K562 (cell line): ENCODE measurements at regions of chr7 and their contacts with region 1.

Region 1: DNA sequence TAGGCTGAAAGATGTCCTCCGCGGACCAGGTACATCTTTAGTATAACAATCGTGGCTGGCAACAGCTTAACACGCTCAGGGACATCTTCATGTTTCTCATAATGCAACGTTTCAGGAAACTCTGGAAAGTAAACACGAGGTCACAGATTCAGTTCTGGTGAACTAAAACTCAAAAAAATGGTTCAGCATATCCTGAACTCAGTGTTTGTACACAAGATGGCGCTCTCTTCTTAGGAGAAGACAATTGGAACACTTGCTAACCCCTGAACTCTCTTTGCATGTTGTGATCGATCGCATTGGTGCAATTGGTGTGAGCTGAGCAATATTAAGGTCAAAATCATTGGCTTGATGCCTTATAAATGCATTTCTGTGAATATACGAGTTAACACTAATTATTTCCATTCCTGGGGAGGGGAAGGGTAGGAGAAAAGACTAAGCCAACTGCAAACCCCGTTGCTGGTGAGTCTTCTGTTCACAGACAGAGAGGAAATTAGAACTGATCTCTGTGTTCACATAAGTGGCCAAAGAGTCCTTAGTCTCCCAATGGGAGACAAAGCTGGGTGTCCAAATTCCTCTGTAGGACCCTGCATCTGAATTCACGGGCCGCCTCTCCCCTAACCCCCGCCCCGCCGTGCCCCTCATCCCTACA is 52.6 kb upstream of the FAM180A start:
- DNase-seq: peak; percentile 74 to 83 (median 78)
- ATAC-seq: peak; percentile 84
- H3K4me3 ChIP-seq: no peak overlapping the region
- H3K27ac ChIP-seq: no peak overlapping the region
- H3K4me1 ChIP-seq: peaks cover 6 to 10% of the 10 kb centered on the region in 2 experiments; a peak in 3 of 5 replicates
- H3K27me3 ChIP-seq: peaks cover 13 to 27% of the 10 kb centered on the region in 2 experiments; a peak in 4 of 5 replicates
- CTCF ChIP-seq: peak; percentile 87 to 98 (median 96)
- EP300 ChIP-seq: no peak
- POLR2A ChIP-seq: no peak
- RAD21 ChIP-seq: peak; percentile 100

Region 2: GRCh38 chr7:135620980-135621850 is 180.0 kb before region 1 on chr7:
- CTCF ChIA-PET with region 1: no interaction called
- POLR2A ChIA-PET with region 1: no interaction called
- in situ Hi-C with region 1: no loop called
- intact Hi-C with region 1: loop called (anchors 2 kb)
- DNase-seq: peak; percentile 39 to 73 (median 49)
- ATAC-seq: peak; percentile 84
- H3K4me3 ChIP-seq: no peak overlapping the region
- H3K27ac ChIP-seq: no peak overlapping the region
- H3K4me1 ChIP-seq: no peaks in the 10 kb centered on the region
- H3K27me3 ChIP-seq: no peaks in the 10 kb centered on the region
- CTCF ChIP-seq: peak; percentile 59 to 90 (median 79); a peak in 5 of 6 replicates
- EP300 ChIP-seq: no peak
- POLR2A ChIP-seq: no peak
- RAD21 ChIP-seq: peak; percentile 82 to 91

Region 3: GRCh38 chr7:135970682-135971365 is 169.7 kb after region 1 on chr7:
- CTCF ChIA-PET with region 1: no interaction called
- POLR2A ChIA-PET with region 1: no interaction called
- in situ Hi-C with region 1: no loop called
- intact Hi-C with region 1: no loop called
- DNase-seq: no peak
- ATAC-seq: no peak
- H3K4me3 ChIP-seq: no peak overlapping the region
- H3K27ac ChIP-seq: peak overlapping the region; percentile 13; the same call in 1 of the 3 replicates
- H3K4me1 ChIP-seq: peaks cover 6 to 33% of the 10 kb centered on the region in 2 experiments; a peak in 4 of 5 replicates
- H3K27me3 ChIP-seq: no peaks in the 10 kb centered on the region
- CTCF ChIP-seq: no peak
- EP300 ChIP-seq: no peak
- POLR2A ChIP-seq: no peak
- RAD21 ChIP-seq: no peak

Region 4: DNA sequence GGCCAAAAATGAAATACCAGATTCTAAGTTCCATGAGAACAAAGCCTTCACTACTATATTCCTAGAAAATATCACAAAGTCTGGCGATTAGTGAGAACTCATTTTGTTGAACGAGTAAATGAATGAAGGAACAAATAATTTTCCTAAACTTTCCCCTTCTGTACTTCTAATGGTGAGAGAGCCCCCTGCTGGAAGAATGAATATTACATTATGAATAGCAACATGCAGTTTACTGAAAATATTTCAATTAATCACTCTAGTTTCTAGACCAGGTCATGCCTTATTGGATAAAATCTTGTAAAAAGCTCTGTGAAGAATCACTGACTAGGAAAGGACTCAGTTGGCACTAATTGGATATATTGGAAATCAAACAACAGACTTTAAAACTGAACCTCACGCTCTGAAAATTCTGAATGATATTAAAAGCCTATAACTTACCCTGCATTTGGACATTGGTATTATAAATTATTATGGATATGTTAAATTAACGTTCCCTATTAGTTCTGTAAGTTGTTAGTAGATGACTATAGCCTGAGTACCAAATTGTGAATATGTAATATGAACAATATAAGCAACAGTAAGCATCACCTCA is 208.4 kb after region 1 on chr7:
- CTCF ChIA-PET with region 1: interaction called, 68 read pairs
- POLR2A ChIA-PET with region 1: interaction called, 5 read pairs
- in situ Hi-C with region 1: loop called (anchors 5 kb)
- intact Hi-C with region 1: loop called (anchors 1 kb)
- DNase-seq: peak; percentile 52 to 79 (median 57)
- ATAC-seq: peak; percentile 81
- H3K4me3 ChIP-seq: no peak overlapping the region
- H3K27ac ChIP-seq: no peak overlapping the region
- H3K4me1 ChIP-seq: no peaks in the 10 kb centered on the region
- H3K27me3 ChIP-seq: no peaks in the 10 kb centered on the region
- CTCF ChIP-seq: peak; percentile 54 to 95 (median 71); a peak in 4 of 6 replicates
- EP300 ChIP-seq: peak; percentile 44; the same call in 1 of the 2 replicates
- POLR2A ChIP-seq: no peak
- RAD21 ChIP-seq: peak; percentile 99 to 100

Region 5: DNA sequence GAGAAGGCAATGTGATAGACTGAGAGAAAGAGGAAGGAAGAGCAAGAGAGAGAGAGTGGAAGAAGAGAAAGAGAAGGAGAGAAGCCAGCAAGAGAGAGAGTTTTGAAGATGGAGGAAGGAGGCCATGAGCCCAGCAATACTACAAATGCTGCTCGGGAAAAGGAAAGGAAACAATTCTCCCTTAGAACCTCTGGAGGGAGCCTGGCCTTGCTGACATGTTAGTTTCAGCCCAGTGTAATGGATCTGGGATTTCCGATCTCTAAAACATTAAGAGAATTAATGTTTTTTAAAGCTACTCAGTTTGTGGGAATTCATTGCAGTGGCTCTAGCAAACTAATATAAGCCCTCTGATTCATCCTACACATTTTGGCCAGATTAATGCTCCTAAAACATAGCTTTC is 382.8 kb after region 1 on chr7:
- CTCF ChIA-PET with region 1: no interaction called
- POLR2A ChIA-PET with region 1: no interaction called
- in situ Hi-C with region 1: no loop called
- intact Hi-C with region 1: loop called (anchors 10 kb)
- DNase-seq: peak in 1 of 4 experiments; percentile 40
- ATAC-seq: peak; percentile 81
- H3K4me3 ChIP-seq: no peak overlapping the region
- H3K27ac ChIP-seq: no peak overlapping the region
- H3K4me1 ChIP-seq: no peaks in the 10 kb centered on the region; a peak in 1 of 5 replicates
- H3K27me3 ChIP-seq: no peaks in the 10 kb centered on the region
- CTCF ChIP-seq: peak; percentile 9 to 39 (median 31); a peak in 3 of 6 replicates
- EP300 ChIP-seq: no peak
- POLR2A ChIP-seq: no peak
- RAD21 ChIP-seq: peak; percentile 33 to 53

Region 6: DNA sequence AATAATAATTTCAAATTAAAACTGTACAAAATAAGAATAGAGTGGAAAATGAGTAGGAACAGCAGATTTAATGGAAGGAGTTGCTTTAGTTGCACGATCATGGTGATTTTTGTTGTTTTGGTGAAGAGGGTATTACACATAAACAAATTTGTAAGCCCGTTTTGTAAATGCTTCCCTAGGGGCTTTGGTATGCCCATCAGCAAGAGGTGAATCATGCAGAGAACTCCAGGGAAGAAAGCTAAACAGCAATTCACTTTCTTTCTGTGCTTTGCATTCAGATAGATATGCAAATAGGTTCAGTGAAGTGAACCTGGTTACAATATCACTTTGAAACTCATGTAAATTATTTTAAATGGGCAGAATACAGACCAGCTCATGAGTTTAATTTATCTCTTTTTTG is 598.2 kb after region 1 on chr7:
- CTCF ChIA-PET with region 1: no interaction called
- POLR2A ChIA-PET with region 1: no interaction called
- in situ Hi-C with region 1: no loop called
- intact Hi-C with region 1: no loop called
- DNase-seq: no peak
- ATAC-seq: no peak
- H3K4me3 ChIP-seq: no peak overlapping the region
- H3K27ac ChIP-seq: no peak overlapping the region
- H3K4me1 ChIP-seq: no peaks in the 10 kb centered on the region
- H3K27me3 ChIP-seq: no peaks in the 10 kb centered on the region
- CTCF ChIP-seq: no peak
- EP300 ChIP-seq: no peak
- POLR2A ChIP-seq: no peak
- RAD21 ChIP-seq: no peak

Region 7: DNA sequence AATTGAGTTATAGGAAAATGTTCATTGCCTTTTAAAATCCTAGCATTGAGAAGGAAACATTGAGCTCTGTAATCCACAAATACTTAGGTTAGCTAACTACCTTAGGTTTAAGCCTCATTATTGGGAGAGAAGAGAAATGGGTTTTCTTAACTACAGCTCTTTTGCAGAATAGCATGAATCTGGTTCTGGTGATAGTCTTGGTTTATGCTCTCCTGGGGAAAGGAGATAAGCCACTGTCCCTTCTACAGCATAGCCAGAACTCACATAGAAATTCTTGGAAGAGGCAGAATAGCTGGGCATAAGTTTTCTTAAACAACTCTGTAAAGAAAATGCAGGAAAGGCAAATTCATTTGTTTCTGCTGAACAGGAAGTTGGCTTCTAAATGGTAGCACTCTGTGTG is 688.6 kb after region 1 on chr7:
- CTCF ChIA-PET with region 1: no interaction called
- POLR2A ChIA-PET with region 1: no interaction called
- in situ Hi-C with region 1: no loop called
- intact Hi-C with region 1: loop called (anchors 10 kb)
- DNase-seq: peak in 3 of 4 experiments; percentile 25 to 84 (median 67)
- ATAC-seq: peak; percentile 92
- H3K4me3 ChIP-seq: no peak overlapping the region
- H3K27ac ChIP-seq: peak overlapping the region; percentile 54
- H3K4me1 ChIP-seq: peaks cover 0 to 14% of the 10 kb centered on the region in 2 experiments; a peak in 1 of 5 replicates
- H3K27me3 ChIP-seq: no peaks in the 10 kb centered on the region
- CTCF ChIP-seq: no peak
- EP300 ChIP-seq: peak; percentile 80
- POLR2A ChIP-seq: no peak
- RAD21 ChIP-seq: no peak

Region 8: DNA sequence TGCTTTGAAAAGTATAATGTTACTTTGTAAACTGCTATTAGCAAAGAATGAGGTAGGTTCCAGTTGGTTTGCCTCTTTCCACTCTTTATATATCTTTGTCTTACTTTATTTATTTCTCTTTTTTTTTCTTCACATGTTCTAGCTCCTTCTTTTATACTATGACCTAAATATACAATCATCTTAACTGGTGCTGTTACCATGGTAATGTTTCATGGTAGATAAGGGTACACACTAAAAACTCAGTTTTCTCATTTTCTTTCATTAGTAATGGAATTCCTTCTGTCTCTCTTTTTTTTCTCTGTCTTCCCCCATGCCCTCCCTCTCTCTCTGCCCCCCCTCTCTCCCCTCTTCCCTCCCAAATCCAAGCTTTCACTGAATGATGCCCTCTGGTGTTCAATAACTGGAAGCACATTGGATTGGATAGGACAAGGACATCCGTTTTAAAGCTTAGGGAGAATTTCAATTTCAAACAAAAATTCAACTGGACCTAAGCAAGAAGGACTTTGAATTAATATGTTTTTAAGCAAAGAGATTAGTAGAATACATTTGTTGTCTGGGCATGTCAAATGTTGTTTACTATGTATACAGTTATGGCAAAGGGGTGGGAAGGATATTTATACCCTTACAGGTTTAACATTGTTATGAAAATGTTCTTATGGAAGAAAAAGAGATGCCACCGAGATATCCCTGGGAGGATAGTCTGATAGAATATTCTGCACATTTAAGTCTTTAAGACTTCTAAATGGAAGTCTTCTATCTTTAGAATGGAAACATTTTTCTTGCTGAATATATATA is 1073.3 kb after region 1 on chr7:
- CTCF ChIA-PET with region 1: interaction called, 6 read pairs
- POLR2A ChIA-PET with region 1: no interaction called
- in situ Hi-C with region 1: loop called (anchors 25 kb)
- intact Hi-C with region 1: loop called (anchors 1 kb)
- DNase-seq: peak; percentile 57 to 71 (median 63)
- ATAC-seq: peak; percentile 88
- H3K4me3 ChIP-seq: no peak overlapping the region
- H3K27ac ChIP-seq: no peak overlapping the region
- H3K4me1 ChIP-seq: peaks cover 0 to 9% of the 10 kb centered on the region in 2 experiments; a peak in 1 of 5 replicates
- H3K27me3 ChIP-seq: peaks cover 10 to 20% of the 10 kb centered on the region in 2 experiments; a peak in 3 of 5 replicates
- CTCF ChIP-seq: peak; percentile 36 to 60 (median 53); a peak in 4 of 6 replicates
- EP300 ChIP-seq: no peak
- POLR2A ChIP-seq: no peak
- RAD21 ChIP-seq: peak in 1 of 2 experiments; percentile 44; a peak in 2 of 4 replicates

Region 9: GRCh38 chr7:137592232-137592896 is 1791.2 kb after region 1 on chr7:
- CTCF ChIA-PET with region 1: no interaction called
- POLR2A ChIA-PET with region 1: no interaction called
- in situ Hi-C with region 1: loop called (anchors 10 kb)
- intact Hi-C with region 1: loop called (anchors 2 kb)
- DNase-seq: peak; percentile 48 to 76 (median 64)
- ATAC-seq: peak; percentile 94
- H3K4me3 ChIP-seq: no peak overlapping the region
- H3K27ac ChIP-seq: no peak overlapping the region
- H3K4me1 ChIP-seq: peaks cover 0 to 10% of the 10 kb centered on the region in 2 experiments; a peak in 3 of 5 replicates
- H3K27me3 ChIP-seq: no peaks in the 10 kb centered on the region
- CTCF ChIP-seq: peak; percentile 86 to 92 (median 92)
- EP300 ChIP-seq: no peak
- POLR2A ChIP-seq: no peak
- RAD21 ChIP-seq: peak; percentile 93